ENCODE measurements at regions of chr18 and their contacts with region 1.

Region 1: GRCh38 chr18:10514082-10514481 is 11.7 kb upstream of the NAPG start:
- DNase-seq: no peak
- ATAC-seq: no peak
- H3K4me3 ChIP-seq: no peak overlapping the region
- H3K27ac ChIP-seq: peak overlapping the region in 2 of 12 donors; percentile 22 to 28
- H3K4me1 ChIP-seq: peaks cover 0 to 17% (median 10%) of the 10 kb centered on the region in 12 donors
- H3K27me3 ChIP-seq: no peaks in the 10 kb centered on the region
- CTCF ChIP-seq: no peak
- POLR2A ChIP-seq: no peak

Region 2: DNA sequence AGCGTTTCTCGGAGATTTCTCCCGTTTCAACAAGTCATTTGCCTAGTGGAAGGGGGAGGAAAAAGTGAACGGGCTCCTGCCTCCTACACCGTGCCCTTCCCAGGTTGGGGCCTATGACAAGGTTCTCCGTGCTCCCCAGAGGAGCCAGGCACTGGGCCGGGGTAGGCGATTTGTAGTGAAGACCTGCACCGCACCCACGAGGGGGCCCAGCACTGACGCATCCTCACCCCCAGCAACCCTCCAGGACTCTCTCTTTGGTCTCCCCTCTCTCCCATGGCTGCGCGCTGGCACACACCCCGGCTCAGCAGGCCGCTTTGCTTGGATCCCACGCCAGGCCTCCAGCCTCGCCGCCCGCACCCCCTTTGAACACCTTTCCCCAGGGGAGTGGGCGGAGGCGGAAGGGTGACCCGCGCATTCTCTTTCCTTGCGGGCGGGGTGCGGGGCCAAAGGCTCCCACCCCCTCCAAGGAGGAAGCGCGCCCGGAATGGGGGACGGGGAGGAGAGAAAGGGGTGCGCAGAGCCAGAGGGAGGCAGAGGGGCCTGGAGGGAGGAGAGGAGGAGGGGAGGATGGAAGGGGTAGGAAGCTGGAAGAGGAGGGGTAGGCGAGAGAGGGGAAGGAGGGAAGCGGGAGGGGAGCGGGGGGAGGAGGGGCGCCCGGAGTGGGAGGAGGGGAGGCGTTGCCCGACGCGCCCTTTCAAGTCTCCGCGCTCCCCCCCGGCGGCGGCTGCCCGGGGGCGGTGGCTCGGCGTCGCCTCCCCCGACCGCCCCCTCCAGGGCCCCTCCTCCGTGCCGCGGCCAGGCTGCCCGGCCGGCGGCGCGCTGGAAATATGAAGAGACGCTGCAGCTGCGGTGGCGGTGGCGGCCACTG is 60.0 kb before region 1 on chr18 and contains the start of gene APCDD1:
- intact Hi-C with region 1: loop called in 4 of 10 experiments (anchors 5 kb)
- DNase-seq: peak; percentile 72 to 85 (median 80)
- ATAC-seq: peak; percentile 57 to 89 (median 82)
- H3K4me3 ChIP-seq: peak within 1 kb of the TSS; percentile 48 to 88 (median 72)
- H3K27ac ChIP-seq: peak within 1 kb of the TSS; percentile 67 to 89 (median 80)
- H3K4me1 ChIP-seq: peaks cover 0 to 27% (median 11%) of the 10 kb centered on the region in 12 donors
- H3K27me3 ChIP-seq: peaks cover 0 to 36% (median 0%) of the 10 kb centered on the region in 9 donors
- CTCF ChIP-seq: peak in 2 of 12 donors; percentile 12 to 13
- POLR2A ChIP-seq: peak in 1 of 2 donors; percentile 56
- total RNA-seq, gene APCDD1: 7.5 to 65.4 (median 15.7) TPM

Measured in heart left ventricle (tissue), 16 donors.